Colonic mucosa (tissue), 4 donors: ENCODE measurements at regions of chr3 and their contacts with region 1.

Region 1: GRCh38 chr3:161423911-161424522 is 52.7 kb upstream of the SPTSSB start:
- DNase-seq: no peak
- H3K4me3 ChIP-seq: no peak overlapping the region
- H3K27ac ChIP-seq: no peak overlapping the region
- H3K4me1 ChIP-seq: no peaks in the 10 kb centered on the region
- H3K27me3 ChIP-seq: no peaks in the 10 kb centered on the region
- CTCF ChIP-seq: peak; percentile 60

Region 2: DNA sequence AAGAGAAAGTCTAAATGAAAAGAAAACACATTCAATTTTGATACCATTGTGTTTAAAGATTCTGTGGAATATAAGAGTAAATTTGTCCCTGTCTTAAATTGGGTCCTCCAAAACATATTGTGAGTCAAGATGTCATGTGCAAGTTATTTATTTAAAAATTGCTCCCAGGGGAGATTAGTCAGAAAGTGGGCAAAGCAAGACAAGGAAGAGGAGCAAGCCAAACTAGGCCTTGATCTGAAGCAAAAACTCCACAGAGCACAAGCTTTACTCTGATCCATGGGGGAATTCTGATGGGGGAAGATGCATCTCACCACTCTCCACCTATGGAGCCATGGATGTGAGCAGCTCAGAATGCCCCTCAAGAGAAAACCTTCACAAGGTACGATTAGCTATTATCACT is 1778.1 kb before region 1 on chr3:
- intact Hi-C with region 1: no loop called
- DNase-seq: no peak
- H3K4me3 ChIP-seq: no peak overlapping the region
- H3K27ac ChIP-seq: no peak overlapping the region
- H3K4me1 ChIP-seq: no peaks in the 10 kb centered on the region
- H3K27me3 ChIP-seq: no peaks in the 10 kb centered on the region
- CTCF ChIP-seq: no peak

Region 3: GRCh38 chr3:161096771-161097355 is 327.2 kb before region 1 on chr3:
- intact Hi-C with region 1: loop called (anchors 5 kb)
- DNase-seq: no peak
- H3K4me3 ChIP-seq: no peak overlapping the region
- H3K27ac ChIP-seq: no peak overlapping the region
- H3K4me1 ChIP-seq: no peaks in the 10 kb centered on the region
- H3K27me3 ChIP-seq: no peaks in the 10 kb centered on the region
- CTCF ChIP-seq: no peak

Region 4: DNA sequence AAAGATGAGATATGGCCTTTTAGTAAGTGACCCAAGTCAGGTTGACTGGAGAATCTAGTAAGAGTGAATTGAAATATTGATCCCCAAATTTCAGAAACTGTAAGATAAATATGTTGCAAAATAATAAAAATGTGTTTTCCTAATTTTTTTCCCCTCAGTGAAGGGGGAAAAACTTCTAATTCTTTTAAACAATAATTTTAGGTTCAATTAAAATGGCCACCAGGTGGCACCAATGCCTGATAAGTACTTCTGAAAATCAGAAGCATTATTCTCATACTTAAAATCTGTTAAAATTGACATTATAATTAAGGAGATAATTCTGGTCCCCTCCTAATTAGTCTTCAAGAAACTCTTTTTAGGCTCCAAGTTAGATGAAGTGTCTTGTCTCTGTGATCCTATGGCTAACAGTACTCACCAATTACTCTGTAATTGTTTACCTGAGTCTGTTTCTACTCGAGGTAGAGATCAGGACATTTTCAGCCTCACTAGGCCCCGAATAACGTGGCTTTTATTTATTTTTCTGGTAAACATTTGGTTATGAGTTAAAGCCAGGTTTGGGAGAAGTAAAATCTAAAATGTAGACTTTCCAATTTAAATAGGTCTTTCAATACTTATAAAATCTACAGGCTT is 150.3 kb before region 1 on chr3:
- intact Hi-C with region 1: loop called (anchors 2 kb)
- DNase-seq: peak; percentile 29
- H3K4me3 ChIP-seq: no peak overlapping the region
- H3K27ac ChIP-seq: no peak overlapping the region
- H3K4me1 ChIP-seq: no peaks in the 10 kb centered on the region
- H3K27me3 ChIP-seq: no peaks in the 10 kb centered on the region
- CTCF ChIP-seq: peak; percentile 52